Sigmoid colon (tissue), 7 donors: ENCODE measurements at regions of chr6 and their contacts with region 1.

Region 1: DNA sequence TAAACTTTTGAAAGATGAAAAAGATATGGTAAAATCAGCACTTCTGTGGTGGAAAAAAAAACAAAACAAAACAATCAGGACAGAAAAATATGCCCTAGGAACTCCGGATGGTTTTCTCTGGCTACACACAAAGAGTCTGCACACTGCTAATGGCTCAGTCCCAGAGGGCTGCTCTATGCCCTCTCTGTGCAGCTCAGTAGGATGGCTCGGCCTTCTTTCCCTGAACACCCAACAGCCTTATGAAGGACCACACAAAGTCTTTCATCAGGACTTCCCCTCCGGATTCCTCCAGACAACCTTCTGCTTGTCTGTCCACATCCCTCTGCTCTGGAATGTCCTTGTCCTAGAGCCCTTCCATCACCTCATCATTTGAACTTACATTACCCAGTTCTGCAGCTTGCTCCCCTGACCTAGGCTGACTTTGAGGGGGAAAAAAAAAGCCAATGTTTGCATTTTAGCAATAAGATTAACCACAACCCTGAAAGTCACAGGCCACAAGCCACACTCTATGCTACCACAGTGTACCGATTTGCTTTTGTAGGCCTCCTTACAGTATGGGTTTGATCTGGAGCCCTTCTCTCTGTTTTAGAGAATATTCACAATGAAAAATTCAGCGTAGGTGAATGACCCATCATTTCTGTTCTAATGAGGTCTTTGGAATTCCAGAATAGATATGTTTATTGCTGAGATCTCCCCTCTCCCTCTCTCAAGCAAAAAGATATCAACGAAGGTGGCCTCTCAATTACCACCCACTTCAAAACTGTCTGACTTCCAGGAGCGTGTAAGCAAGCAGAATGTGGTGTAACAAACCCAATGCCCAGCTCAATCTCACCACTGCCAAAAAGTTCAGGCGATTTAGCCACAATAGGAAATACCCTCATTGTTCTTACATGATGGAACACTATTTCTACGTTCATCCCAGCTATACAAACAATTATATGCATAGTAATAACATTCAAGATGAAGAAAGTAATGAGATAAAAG is 164.0 kb downstream of the GMDS start:
- DNase-seq: no peak
- H3K4me3 ChIP-seq: no peak overlapping the region
- H3K27ac ChIP-seq: no peak overlapping the region
- H3K4me1 ChIP-seq: no peaks in the 10 kb centered on the region
- H3K27me3 ChIP-seq: no peaks in the 10 kb centered on the region
- CTCF ChIP-seq: no peak
- EP300 ChIP-seq: no peak
- POLR2A ChIP-seq: no peak

Region 2: DNA sequence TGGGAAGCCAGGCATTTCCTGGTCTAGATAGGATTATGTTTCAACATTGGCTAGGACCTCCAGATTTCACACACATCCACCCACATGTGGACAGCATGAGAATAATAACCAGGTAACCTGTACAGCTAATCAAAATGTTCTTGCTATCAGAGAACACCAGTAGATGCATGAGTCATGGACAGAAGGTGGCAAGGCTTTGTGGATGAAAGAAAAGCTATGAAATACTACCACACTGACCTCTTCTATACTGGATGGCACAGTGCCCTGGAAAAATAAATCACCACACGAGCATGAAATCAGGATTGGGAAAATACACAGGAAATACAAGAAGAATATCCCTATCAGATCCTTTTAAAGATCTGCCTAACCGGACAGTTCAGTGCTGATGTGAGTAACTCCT is 51.0 kb after region 1 on chr6:
- intact Hi-C with region 1: loop called (anchors 10 kb)
- DNase-seq: no peak
- H3K4me3 ChIP-seq: no peak overlapping the region
- H3K27ac ChIP-seq: no peak overlapping the region
- H3K4me1 ChIP-seq: peaks cover 0 to 15% (median 12%) of the 10 kb centered on the region in 4 donors
- H3K27me3 ChIP-seq: no peaks in the 10 kb centered on the region
- CTCF ChIP-seq: no peak
- EP300 ChIP-seq: no peak
- POLR2A ChIP-seq: no peak